ENCODE measurements at regions of chr9 and their contacts with region 1.

Region 1: GRCh38 chr9:97890038-97890437 is 32.3 kb downstream of the TRMO start:
- DNase-seq: peak in 2 of 3 donors; percentile 38 to 47
- ATAC-seq: peak; percentile 41 to 56 (median 50)
- H3K4me3 ChIP-seq: no peak overlapping the region
- H3K27ac ChIP-seq: no peak overlapping the region
- H3K4me1 ChIP-seq: no peaks in the 10 kb centered on the region
- H3K27me3 ChIP-seq: no peaks in the 10 kb centered on the region
- CTCF ChIP-seq: peak; percentile 29 to 73 (median 60)
- POLR2A ChIP-seq: no peak

Region 2: DNA sequence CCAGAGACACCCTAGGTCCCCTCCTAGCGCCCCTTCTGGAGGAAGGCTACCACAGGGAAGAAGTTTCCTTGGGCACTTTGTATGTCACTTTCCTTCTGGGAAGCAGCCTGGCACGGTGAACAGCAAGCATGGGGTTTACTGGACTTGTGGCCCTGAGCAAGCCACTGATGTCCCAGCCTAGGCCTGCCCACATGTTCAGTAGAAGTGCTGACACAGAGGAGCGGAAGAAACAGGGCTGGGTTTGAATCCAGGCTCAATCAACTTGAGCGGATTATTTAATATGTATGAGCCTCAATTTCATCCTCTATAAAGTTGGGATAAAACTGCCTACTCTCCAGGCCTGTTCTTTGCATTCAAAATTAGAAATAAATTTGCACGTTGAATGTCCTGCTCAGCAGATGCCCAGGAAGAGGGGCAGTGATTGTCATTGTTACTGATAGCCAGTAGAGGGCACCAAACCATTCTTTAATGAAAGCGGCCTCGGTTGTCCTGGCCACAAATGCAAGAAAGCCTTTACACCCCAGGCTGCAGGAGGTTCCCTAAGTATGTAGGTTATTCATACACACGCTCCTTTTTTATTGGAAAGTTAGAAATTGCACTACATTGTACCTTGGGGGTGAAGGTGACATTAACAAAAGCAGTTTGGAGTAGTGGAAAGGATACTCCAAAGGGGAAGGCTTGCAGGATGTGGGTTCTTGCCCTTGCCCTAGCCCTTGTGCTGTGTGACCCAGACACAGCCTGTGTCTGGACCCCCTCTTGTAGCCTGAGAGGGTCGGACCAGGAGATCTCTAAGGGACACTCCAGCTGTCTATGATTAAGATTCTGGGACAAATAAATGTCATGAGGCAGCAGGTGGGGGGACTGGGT is 179.4 kb before region 1 on chr9:
- intact Hi-C with region 1: loop called in 1 of 2 experiments (anchors 10 kb)
- DNase-seq: peak in 1 of 3 donors; percentile 55
- ATAC-seq: peak; percentile 96 to 99 (median 98)
- H3K4me3 ChIP-seq: no peak overlapping the region
- H3K27ac ChIP-seq: no peak overlapping the region
- H3K4me1 ChIP-seq: no peaks in the 10 kb centered on the region
- H3K27me3 ChIP-seq: no peaks in the 10 kb centered on the region
- CTCF ChIP-seq: peak; percentile 80 to 87 (median 86)
- POLR2A ChIP-seq: no peak

Measured in right lobe of liver (tissue), 6 donors.